Uterus (tissue), 4 donors: ENCODE measurements at regions of chr2 and their contacts with region 1.

Region 1: GRCh38 chr2:177263451-177264208 is 897 bp downstream of the NFE2L2 start:
- DNase-seq: peak; percentile 99
- H3K4me3 ChIP-seq: peak overlapping the region; percentile 78 to 88
- H3K27ac ChIP-seq: peak overlapping the region; percentile 99 to 100
- H3K4me1 ChIP-seq: peaks cover 4 to 12% of the 10 kb centered on the region in 2 donors
- H3K27me3 ChIP-seq: no peaks in the 10 kb centered on the region
- CTCF ChIP-seq: peak; percentile 85 to 98 (median 91)
- POLR2A ChIP-seq: peak; percentile 69 to 75

Region 2: GRCh38 chr2:176126929-176127773 is 1136.5 kb before region 1 on chr2:
- intact Hi-C with region 1: loop called (anchors 10 kb)
- DNase-seq: peak; percentile 81 to 88
- H3K4me3 ChIP-seq: peak overlapping the region; percentile 15 to 16
- H3K27ac ChIP-seq: peak overlapping the region; percentile 98 to 99
- H3K4me1 ChIP-seq: no peaks in the 10 kb centered on the region
- H3K27me3 ChIP-seq: no peaks in the 10 kb centered on the region
- CTCF ChIP-seq: peak; percentile 84 to 95 (median 89)
- POLR2A ChIP-seq: peak; percentile 19 to 30

Region 3: DNA sequence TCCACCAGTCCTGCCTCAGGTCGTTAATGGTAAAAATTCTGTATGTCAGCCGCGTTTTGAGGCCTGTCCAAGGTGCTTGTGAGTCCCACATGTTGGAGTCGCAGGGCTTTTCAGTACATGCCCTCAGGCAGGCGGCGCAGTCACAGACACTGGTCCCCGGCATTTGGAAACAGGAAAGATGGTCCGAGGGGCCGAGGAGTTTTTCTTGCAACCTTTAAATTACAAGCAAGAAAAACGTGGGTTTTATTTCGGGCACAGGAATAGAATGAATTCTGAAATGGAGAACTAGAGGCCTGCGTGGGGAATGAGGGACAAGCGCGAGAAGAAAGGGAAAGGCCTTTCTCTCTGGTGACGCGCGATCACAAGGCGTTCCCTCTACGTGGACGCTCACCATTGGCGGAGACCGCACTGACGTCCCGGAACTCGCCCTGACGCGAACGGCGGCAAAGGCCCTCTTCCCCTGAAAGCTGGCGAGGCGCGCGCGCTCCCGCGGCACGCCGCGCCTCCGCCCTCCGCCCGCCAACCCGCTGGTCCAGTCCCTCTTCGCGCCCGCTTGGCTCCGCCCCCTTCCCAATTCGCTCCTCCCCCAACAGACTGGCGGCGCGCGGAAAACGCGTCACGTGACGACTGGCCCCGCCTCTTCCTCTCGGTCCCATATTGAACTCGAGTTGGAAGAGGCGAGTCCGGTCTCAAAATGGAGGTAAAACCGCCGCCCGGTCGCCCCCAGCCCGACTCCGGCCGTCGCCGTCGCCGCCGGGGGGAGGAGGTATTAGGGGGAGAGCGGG is 51.3 kb before region 1 on chr2 and contains the start of gene HNRNPA3:
- intact Hi-C with region 1: loop called (anchors 5 kb)
- DNase-seq: peak; percentile 98 to 100
- H3K4me3 ChIP-seq: peak within 1 kb of the TSS; percentile 86 to 95
- H3K27ac ChIP-seq: peak within 1 kb of the TSS; percentile 99 to 100
- H3K4me1 ChIP-seq: peaks cover 0 to 17% of the 10 kb centered on the region in 2 donors
- H3K27me3 ChIP-seq: no peaks in the 10 kb centered on the region
- CTCF ChIP-seq: peak in 3 of 4 experiments; percentile 30 to 54 (median 37)
- POLR2A ChIP-seq: peak; percentile 92 to 94
- total RNA-seq, gene HNRNPA3: 56.4 to 256 (median 107) TPM